ENCODE measurements at regions of chr6 and their contacts with region 1.

Region 1: GRCh38 chr6:18432180-18432579 is 45.0 kb downstream of the RNF144B start:
- DNase-seq: peak; percentile 83
- H3K4me3 Mint-ChIP-seq: peak overlapping the region; percentile 0
- H3K27ac Mint-ChIP-seq: peak overlapping the region; percentile 98
- H3K4me1 Mint-ChIP-seq: peaks cover 43% of the 10 kb centered on the region
- H3K27me3 Mint-ChIP-seq: no peaks in the 10 kb centered on the region
- CTCF ChIP-seq: no peak

Region 2: GRCh38 chr6:18216411-18216810 is 215.8 kb before region 1 on chr6:
- CTCF ChIA-PET with region 1: no interaction called
- POLR2A ChIA-PET with region 1: no interaction called
- intact Hi-C with region 1: no loop called
- DNase-seq: peak; percentile 22
- H3K4me3 Mint-ChIP-seq: no peak overlapping the region
- H3K27ac Mint-ChIP-seq: no peak overlapping the region
- H3K4me1 Mint-ChIP-seq: no peaks in the 10 kb centered on the region
- H3K27me3 Mint-ChIP-seq: no peaks in the 10 kb centered on the region
- CTCF ChIP-seq: no peak

Region 3: GRCh38 chr6:18343741-18344140 is 88.4 kb before region 1 on chr6:
- CTCF ChIA-PET with region 1: interaction called, 4 read pairs
- POLR2A ChIA-PET with region 1: interaction called, 8 read pairs
- intact Hi-C with region 1: loop called (anchors 2 kb)
- DNase-seq: peak; percentile 47
- H3K4me3 Mint-ChIP-seq: no peak overlapping the region
- H3K27ac Mint-ChIP-seq: peak overlapping the region; percentile 83
- H3K4me1 Mint-ChIP-seq: peaks cover 32% of the 10 kb centered on the region
- H3K27me3 Mint-ChIP-seq: no peaks in the 10 kb centered on the region
- CTCF ChIP-seq: no peak

Region 4: GRCh38 chr6:18363749-18364148 is 68.4 kb before region 1 on chr6:
- CTCF ChIA-PET with region 1: no interaction called
- POLR2A ChIA-PET with region 1: no interaction called
- intact Hi-C with region 1: no loop called
- DNase-seq: no peak
- H3K4me3 Mint-ChIP-seq: no peak overlapping the region
- H3K27ac Mint-ChIP-seq: no peak overlapping the region
- H3K4me1 Mint-ChIP-seq: peaks cover 16% of the 10 kb centered on the region
- H3K27me3 Mint-ChIP-seq: no peaks in the 10 kb centered on the region
- CTCF ChIP-seq: no peak

Region 5: GRCh38 chr6:18405477-18406293 is 26.5 kb before region 1 on chr6:
- CTCF ChIA-PET with region 1: no interaction called
- POLR2A ChIA-PET with region 1: interaction called, 10 read pairs
- intact Hi-C with region 1: no loop called
- DNase-seq: peak; percentile 69
- H3K4me3 Mint-ChIP-seq: no peak overlapping the region
- H3K27ac Mint-ChIP-seq: peak overlapping the region; percentile 66
- H3K4me1 Mint-ChIP-seq: peaks cover 27% of the 10 kb centered on the region
- H3K27me3 Mint-ChIP-seq: no peaks in the 10 kb centered on the region
- CTCF ChIP-seq: no peak